Natural killer cell (primary cell): ENCODE measurements at regions of chr12 and their contacts with region 1.

Region 1: DNA sequence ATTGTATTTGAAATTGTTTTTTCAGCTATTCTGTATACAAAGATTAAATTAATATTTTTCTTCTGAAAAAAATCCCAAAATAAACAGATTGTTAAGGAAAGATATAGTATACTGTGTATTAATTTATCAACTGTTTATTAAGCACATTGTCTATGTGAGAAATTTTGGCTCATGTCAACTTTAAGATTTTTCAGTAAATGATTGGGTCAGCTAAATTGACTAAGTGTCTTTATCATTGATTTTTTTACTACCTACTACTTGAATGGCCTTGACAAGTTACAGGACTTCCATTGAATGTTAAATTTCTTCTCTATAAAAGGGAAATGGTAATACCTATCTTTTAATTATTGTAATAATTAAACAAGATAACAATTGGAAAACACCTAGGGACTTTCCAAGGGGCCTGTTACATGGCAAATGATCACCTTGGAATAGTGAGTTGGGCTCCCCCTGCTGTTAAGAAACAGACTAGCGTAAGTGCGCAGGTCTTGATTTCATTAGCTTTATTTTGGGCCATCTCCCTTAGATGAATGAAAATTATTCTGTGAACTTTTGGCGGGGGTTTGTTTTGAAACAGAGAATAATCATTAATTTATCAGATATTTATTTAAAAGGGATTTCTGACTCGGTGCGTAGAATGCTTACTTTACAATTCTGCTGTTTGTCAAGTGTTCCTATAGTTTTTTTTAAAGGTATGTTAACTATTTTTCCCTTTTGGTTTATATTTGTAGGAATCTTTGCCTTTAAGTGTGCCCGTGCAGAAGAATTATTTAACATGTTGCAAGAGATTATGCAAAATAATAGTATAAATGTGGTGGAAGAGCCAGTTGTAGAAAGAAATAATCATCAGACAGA is 14.5 kb upstream of the CCT2 start:
- DNase-seq: peak; percentile 22 to 87
- ATAC-seq: peak; percentile 73 to 95 (median 92)
- H3K4me3 ChIP-seq: no peak overlapping the region
- H3K4me3 Mint-ChIP-seq: no peak overlapping the region
- H3K27ac ChIP-seq: no peak overlapping the region
- H3K27ac Mint-ChIP-seq: peak overlapping the region; percentile 34 to 73
- H3K4me1 ChIP-seq: no peaks in the 10 kb centered on the region
- H3K4me1 Mint-ChIP-seq: peaks cover 4 to 8% of the 10 kb centered on the region in 2 donors
- H3K27me3 ChIP-seq: no peaks in the 10 kb centered on the region
- H3K27me3 Mint-ChIP-seq: no peaks in the 10 kb centered on the region
- CTCF ChIP-seq: peak; percentile 81

Region 2: GRCh38 chr12:69154585-69155363 is 416.0 kb before region 1 on chr12:
- intact Hi-C with region 1: loop called (anchors 2 kb)
- DNase-seq: peak; percentile 64 to 91
- ATAC-seq: peak; percentile 56 to 60 (median 59)
- H3K4me3 ChIP-seq: no peak overlapping the region
- H3K4me3 Mint-ChIP-seq: no peak overlapping the region
- H3K27ac ChIP-seq: no peak overlapping the region
- H3K27ac Mint-ChIP-seq: no peak overlapping the region
- H3K4me1 ChIP-seq: peaks cover 7% of the 10 kb centered on the region
- H3K4me1 Mint-ChIP-seq: peaks cover 0 to 6% of the 10 kb centered on the region in 2 donors
- H3K27me3 ChIP-seq: no peaks in the 10 kb centered on the region
- H3K27me3 Mint-ChIP-seq: no peaks in the 10 kb centered on the region
- CTCF ChIP-seq: peak; percentile 94

Region 3: GRCh38 chr12:69290545-69291277 is 280.1 kb before region 1 on chr12:
- intact Hi-C with region 1: loop called (anchors 1 kb)
- DNase-seq: peak; percentile 66 to 91
- ATAC-seq: peak; percentile 97 to 100 (median 100)
- H3K4me3 ChIP-seq: no peak overlapping the region
- H3K4me3 Mint-ChIP-seq: no peak overlapping the region
- H3K27ac ChIP-seq: no peak overlapping the region
- H3K27ac Mint-ChIP-seq: no peak overlapping the region
- H3K4me1 ChIP-seq: peaks cover 3% of the 10 kb centered on the region
- H3K4me1 Mint-ChIP-seq: no peaks in the 10 kb centered on the region
- H3K27me3 ChIP-seq: peaks cover 2% of the 10 kb centered on the region
- H3K27me3 Mint-ChIP-seq: peaks cover 43 to 64% of the 10 kb centered on the region in 2 donors
- CTCF ChIP-seq: peak; percentile 87

Region 4: GRCh38 chr12:69470189-69471075 is 100.3 kb before region 1 on chr12 and contains the start of gene FRS2:
- intact Hi-C with region 1: loop called (anchors 2 kb)
- DNase-seq: peak; percentile 67 to 90
- ATAC-seq: peak; percentile 96 to 97 (median 97)
- H3K4me3 ChIP-seq: peak within 1 kb of the TSS; percentile 83
- H3K4me3 Mint-ChIP-seq: peak within 1 kb of the TSS; percentile 93
- H3K27ac ChIP-seq: peak within 1 kb of the TSS; percentile 81
- H3K27ac Mint-ChIP-seq: peak within 1 kb of the TSS; percentile 82 to 93
- H3K4me1 ChIP-seq: peaks cover 16% of the 10 kb centered on the region
- H3K4me1 Mint-ChIP-seq: peaks cover 29 to 34% of the 10 kb centered on the region in 2 donors
- H3K27me3 ChIP-seq: no peaks in the 10 kb centered on the region
- H3K27me3 Mint-ChIP-seq: no peaks in the 10 kb centered on the region
- CTCF ChIP-seq: no peak
- total RNA-seq, gene FRS2: 25.6 to 33.8 (median 28.2) TPM

Region 5: GRCh38 chr12:69623970-69624369 is 53.2 kb after region 1 on chr12:
- intact Hi-C with region 1: no loop called
- DNase-seq: no peak
- ATAC-seq: no peak
- H3K4me3 ChIP-seq: no peak overlapping the region
- H3K4me3 Mint-ChIP-seq: no peak overlapping the region
- H3K27ac ChIP-seq: no peak overlapping the region
- H3K27ac Mint-ChIP-seq: no peak overlapping the region
- H3K4me1 ChIP-seq: no peaks in the 10 kb centered on the region
- H3K4me1 Mint-ChIP-seq: no peaks in the 10 kb centered on the region
- H3K27me3 ChIP-seq: no peaks in the 10 kb centered on the region
- H3K27me3 Mint-ChIP-seq: peaks cover 9 to 13% of the 10 kb centered on the region in 2 donors
- CTCF ChIP-seq: no peak